ENCODE measurements at regions of chr6 and their contacts with region 1.

Region 1: GRCh38 chr6:25017932-25018567 is 82.3 kb upstream of the RIPOR2 start:
- DNase-seq: peak; percentile 90
- H3K4me3 Mint-ChIP-seq: no peak overlapping the region
- H3K27ac Mint-ChIP-seq: peak overlapping the region; percentile 10
- H3K4me1 Mint-ChIP-seq: peaks cover 28% of the 10 kb centered on the region
- H3K27me3 Mint-ChIP-seq: no peaks in the 10 kb centered on the region
- CTCF ChIP-seq: peak; percentile 95

Region 2: DNA sequence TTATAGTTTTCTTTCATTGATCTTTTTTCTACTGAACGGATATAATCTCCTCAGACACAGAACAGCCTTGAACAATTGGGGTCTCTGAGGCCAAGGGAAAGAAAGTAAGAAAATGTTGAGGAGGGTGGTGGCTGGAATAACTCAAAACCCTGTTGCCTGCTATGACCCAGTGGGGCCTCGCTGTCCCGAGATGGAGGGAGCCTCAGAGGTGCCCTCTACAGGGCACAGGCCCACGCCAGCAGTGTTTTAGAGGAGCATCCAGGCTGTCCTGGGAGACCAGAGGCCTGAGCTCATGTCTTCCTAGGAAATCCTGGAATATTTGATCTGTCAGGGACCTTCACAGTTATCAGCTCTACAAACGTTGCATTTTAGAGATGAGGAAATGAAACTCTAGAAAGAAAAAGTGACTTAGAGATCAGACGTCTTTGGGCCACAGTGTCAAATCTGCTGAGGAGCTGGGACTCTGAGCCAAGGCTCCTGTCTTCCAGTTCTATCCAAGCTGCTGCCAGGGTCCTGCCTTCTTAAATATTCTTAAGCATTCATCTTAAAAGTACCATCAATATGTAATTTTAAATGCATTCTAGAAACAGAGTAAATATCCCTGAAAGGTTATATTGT is 497.0 kb before region 1 on chr6:
- CTCF ChIA-PET with region 1: interaction called, 6 read pairs
- intact Hi-C with region 1: loop called (anchors 5 kb)
- DNase-seq: peak; percentile 87
- H3K4me3 Mint-ChIP-seq: no peak overlapping the region
- H3K27ac Mint-ChIP-seq: no peak overlapping the region
- H3K4me1 Mint-ChIP-seq: peaks cover 16% of the 10 kb centered on the region
- H3K27me3 Mint-ChIP-seq: no peaks in the 10 kb centered on the region
- CTCF ChIP-seq: peak; percentile 94

Region 3: GRCh38 chr6:24720604-24721460 is 297.2 kb before region 1 on chr6:
- CTCF ChIA-PET with region 1: interaction called, 3 read pairs
- intact Hi-C with region 1: loop called (anchors 5 kb)
- DNase-seq: peak; percentile 100
- H3K4me3 Mint-ChIP-seq: peak overlapping the region; percentile 97
- H3K27ac Mint-ChIP-seq: peak overlapping the region; percentile 94
- H3K4me1 Mint-ChIP-seq: peaks cover 20% of the 10 kb centered on the region
- H3K27me3 Mint-ChIP-seq: no peaks in the 10 kb centered on the region
- CTCF ChIP-seq: no peak

Region 4: DNA sequence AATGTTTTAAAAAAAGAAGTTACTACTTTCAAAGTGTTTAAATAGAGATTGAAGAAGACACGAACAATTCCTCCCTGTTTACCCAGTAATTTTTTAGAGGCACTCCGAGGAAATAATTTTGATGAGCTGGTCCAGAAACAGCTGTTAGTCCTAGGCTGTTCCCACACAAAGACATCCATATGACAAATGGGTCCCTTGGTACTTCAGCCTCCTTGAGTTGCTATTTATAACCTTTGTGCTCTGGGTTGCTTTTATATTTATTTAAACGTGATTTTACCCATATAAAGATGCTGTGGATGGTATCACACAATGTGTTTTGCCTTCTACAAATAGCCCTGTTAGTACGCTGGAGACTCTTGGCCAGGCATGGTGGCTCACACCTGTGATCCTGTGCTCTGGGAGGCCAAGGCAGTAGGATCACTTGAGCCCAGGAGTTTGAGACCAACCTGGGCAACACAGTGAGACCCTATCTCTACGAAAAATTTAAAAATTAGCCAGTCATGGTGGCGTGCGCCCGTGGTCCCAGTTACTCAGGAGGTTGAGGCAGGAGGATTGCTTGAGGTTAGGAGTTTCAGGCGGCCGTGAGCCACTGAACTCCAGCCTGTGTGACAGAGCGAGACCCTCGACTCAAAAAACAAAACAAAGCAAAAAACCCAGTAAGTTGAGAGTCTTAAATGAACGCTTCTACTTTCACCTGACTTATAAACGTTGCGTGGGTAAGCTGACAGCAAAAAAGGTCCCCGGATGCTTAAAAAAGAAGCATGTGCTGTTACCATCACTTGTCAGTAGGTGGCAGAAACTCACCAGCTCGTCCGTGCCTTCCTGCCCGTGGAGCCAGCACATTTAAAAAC is 162.4 kb before region 1 on chr6:
- CTCF ChIA-PET with region 1: interaction called, 133 read pairs
- intact Hi-C with region 1: loop called (anchors 1 kb)
- DNase-seq: peak; percentile 81
- H3K4me3 Mint-ChIP-seq: no peak overlapping the region
- H3K27ac Mint-ChIP-seq: no peak overlapping the region
- H3K4me1 Mint-ChIP-seq: peaks cover 29% of the 10 kb centered on the region
- H3K27me3 Mint-ChIP-seq: no peaks in the 10 kb centered on the region
- CTCF ChIP-seq: peak; percentile 94

Region 5: DNA sequence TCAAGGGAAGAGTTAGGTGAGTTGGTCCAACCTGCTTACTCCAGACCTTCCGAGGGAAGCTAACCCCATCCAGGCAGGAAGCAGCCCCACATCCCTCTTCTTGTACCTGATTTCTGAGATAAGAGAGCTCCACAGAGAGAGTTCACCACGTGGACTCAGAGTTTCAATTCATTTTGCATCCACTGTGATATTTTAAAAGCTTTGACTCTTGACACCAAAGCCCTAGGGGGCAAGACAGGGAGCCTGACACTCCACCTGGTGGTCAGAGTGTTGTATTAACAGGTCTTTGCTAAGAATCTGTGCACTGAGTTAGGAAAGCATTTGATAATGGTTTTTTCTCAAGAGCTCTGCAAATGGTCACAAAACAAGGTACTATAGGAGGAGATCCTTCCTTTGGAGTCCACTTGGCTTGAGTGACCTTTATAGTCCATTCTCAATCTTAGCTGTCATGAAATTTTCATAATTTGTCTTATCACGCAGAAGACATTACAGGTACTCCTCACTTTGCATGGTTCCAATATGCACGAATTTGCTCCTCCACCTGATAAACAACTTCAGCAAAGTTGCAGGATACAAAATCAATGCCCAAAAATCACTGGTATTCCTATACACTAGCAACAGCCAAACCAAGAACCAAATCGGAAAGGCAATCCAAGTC is 26.1 kb before region 1 on chr6:
- CTCF ChIA-PET with region 1: interaction called, 49 read pairs
- intact Hi-C with region 1: no loop called
- DNase-seq: peak; percentile 84
- H3K4me3 Mint-ChIP-seq: no peak overlapping the region
- H3K27ac Mint-ChIP-seq: no peak overlapping the region
- H3K4me1 Mint-ChIP-seq: peaks cover 54% of the 10 kb centered on the region
- H3K27me3 Mint-ChIP-seq: no peaks in the 10 kb centered on the region
- CTCF ChIP-seq: peak; percentile 98

Region 6: DNA sequence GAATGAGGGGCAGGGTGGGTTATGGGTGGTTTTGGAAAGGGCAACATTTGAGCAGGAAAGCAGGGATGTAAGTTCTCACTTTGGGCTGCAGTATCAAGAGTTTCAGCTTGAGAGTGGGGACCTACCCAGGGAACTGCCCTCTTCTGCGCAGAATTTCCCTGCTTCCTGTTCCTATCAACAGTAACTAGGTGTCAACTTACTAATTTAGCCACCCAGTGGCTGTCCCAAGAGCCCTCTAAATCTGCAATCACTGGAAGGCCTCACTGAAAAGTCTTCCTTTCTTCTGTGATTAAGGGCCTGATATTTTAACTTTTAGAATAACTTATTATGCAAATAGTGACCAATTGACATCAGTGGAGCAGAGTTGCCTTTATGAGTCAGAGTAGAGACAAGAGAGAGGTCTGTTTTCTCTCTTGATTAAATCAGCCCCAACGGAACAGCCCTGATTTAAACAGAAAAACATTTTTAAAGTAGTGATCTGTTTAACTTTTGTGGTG is 35.9 kb after region 1 on chr6:
- CTCF ChIA-PET with region 1: interaction called, 14 read pairs
- intact Hi-C with region 1: no loop called
- DNase-seq: no peak
- H3K4me3 Mint-ChIP-seq: no peak overlapping the region
- H3K27ac Mint-ChIP-seq: no peak overlapping the region
- H3K4me1 Mint-ChIP-seq: peaks cover 12% of the 10 kb centered on the region
- H3K27me3 Mint-ChIP-seq: no peaks in the 10 kb centered on the region
- CTCF ChIP-seq: no peak

Region 7: DNA sequence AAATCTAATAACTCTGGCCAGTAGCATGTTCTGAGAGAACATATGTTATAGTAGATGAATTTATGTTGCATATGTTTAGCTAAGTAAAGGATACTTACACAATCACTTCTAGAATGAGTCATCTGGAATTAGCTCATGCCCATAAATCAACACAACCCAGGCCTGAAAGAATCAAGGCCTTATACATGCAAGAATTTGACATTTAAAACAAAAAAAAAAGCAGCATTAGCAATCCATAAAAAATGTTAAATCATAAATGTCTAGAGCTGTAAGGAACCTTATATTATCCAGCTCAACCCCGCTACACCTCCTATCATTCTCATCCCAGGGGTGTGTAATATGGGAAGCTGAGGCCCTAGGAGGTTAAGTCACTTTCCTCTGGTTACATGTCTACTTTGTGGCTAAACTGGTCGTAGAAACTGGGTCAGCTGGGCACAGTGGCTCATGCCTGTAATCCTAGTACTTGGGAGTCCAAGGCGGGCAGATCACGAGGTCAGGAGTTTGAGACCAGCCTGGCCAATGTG is 156.0 kb after region 1 on chr6:
- CTCF ChIA-PET with region 1: interaction called, 12 read pairs
- intact Hi-C with region 1: no loop called
- DNase-seq: peak; percentile 83
- H3K4me3 Mint-ChIP-seq: no peak overlapping the region
- H3K27ac Mint-ChIP-seq: peak overlapping the region; percentile 73
- H3K4me1 Mint-ChIP-seq: peaks cover 57% of the 10 kb centered on the region
- H3K27me3 Mint-ChIP-seq: no peaks in the 10 kb centered on the region
- CTCF ChIP-seq: no peak